GM12878 (cell line): ENCODE measurements at regions of chr5 and their contacts with region 1.

Region 1: GRCh38 chr5:43040287-43041098 is at the start of gene ANXA2R:
- DNase-seq: no peak
- ATAC-seq: peak; percentile 60
- H3K4me3 ChIP-seq: peak within 1 kb of the TSS; percentile 66
- H3K27ac ChIP-seq: peak within 1 kb of the TSS; percentile 82
- H3K4me1 ChIP-seq: peaks cover 20% of the 10 kb centered on the region
- H3K27me3 ChIP-seq: no peaks in the 10 kb centered on the region
- CTCF ChIP-seq: peak; percentile 83 to 95 (median 92)
- EP300 ChIP-seq: no peak
- POLR2A ChIP-seq: peak; percentile 27; the same call in 1 of the 2 replicates
- RAD21 ChIP-seq: peak; percentile 92
- polyA plus RNA-seq, gene ANXA2R: 3.2 to 4.5 TPM

Region 2: DNA sequence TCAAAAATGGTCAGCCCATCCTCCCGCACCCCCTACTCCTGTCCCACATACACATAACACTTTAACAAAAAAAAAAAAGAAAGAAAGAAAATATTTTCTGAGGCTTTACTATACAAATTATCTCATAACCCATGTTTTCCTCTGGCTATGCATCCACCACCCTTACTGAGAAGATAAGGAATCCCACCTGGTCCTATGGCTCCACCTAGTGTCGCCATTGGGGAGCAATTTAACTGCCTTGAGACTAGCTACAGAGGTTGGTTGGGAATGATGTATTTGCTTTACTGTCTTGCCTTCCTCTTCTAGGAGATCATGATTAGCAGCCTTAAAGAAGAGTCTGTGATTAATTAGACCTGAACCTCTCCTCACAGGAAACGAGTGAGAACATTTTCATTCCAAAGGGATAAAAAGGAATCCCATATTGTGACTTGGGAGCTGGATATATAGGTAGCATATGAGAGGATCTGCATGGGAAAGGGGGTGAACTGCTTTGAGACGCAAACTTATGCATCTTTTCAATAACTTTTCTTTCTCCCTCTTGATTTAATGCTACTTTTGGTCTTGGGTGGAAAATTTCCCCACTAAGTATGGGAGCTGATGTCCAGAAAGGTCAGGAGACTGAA is 151.1 kb before region 1 on chr5:
- CTCF ChIA-PET with region 1: interaction called, 11 read pairs
- POLR2A ChIA-PET with region 1: interaction called, 3 read pairs
- RAD21 ChIA-PET with region 1: interaction called, 4 read pairs
- SMC1A ChIA-PET with region 1: no interaction called
- in situ Hi-C with region 1: no loop called
- intact Hi-C with region 1: no loop called
- DNase-seq: no peak
- ATAC-seq: peak; percentile 97; the same call in 2 of the 3 replicates
- H3K4me3 ChIP-seq: no peak overlapping the region
- H3K27ac ChIP-seq: no peak overlapping the region
- H3K4me1 ChIP-seq: no peaks in the 10 kb centered on the region
- H3K27me3 ChIP-seq: peaks cover 0 to 2% of the 10 kb centered on the region in 2 experiments; a peak in 2 of 4 replicates
- CTCF ChIP-seq: peak; percentile 85 to 92 (median 90)
- EP300 ChIP-seq: no peak
- POLR2A ChIP-seq: no peak
- RAD21 ChIP-seq: peak; percentile 96

Region 3: GRCh38 chr5:42994246-42995151 is 46.0 kb before region 1 on chr5:
- CTCF ChIA-PET with region 1: interaction called, 70 read pairs
- POLR2A ChIA-PET with region 1: interaction called, 28 read pairs
- RAD21 ChIA-PET with region 1: interaction called, 48 read pairs
- SMC1A ChIA-PET with region 1: interaction called, 43 read pairs
- in situ Hi-C with region 1: no loop called
- intact Hi-C with region 1: loop called (anchors 1 kb)
- DNase-seq: no peak
- ATAC-seq: peak; percentile 72
- H3K4me3 ChIP-seq: peak overlapping the region; percentile 82
- H3K27ac ChIP-seq: peak overlapping the region; percentile 94
- H3K4me1 ChIP-seq: peaks cover 12% of the 10 kb centered on the region
- H3K27me3 ChIP-seq: no peaks in the 10 kb centered on the region
- CTCF ChIP-seq: peak; percentile 89 to 94 (median 90)
- EP300 ChIP-seq: 0 out of 4 replicates have a peak, but pooled peaks of 1 of the 2 experiments have one; percentile 13
- POLR2A ChIP-seq: 0 out of 2 replicates have a peak, but pooled peaks have one; percentile 29
- RAD21 ChIP-seq: peak; percentile 75

Region 4: GRCh38 chr5:43019614-43020293 is 20.7 kb before region 1 on chr5:
- CTCF ChIA-PET with region 1: interaction called, 44 read pairs
- POLR2A ChIA-PET with region 1: interaction called, 32 read pairs
- RAD21 ChIA-PET with region 1: interaction called, 70 read pairs
- SMC1A ChIA-PET with region 1: interaction called, 111 read pairs
- in situ Hi-C with region 1: no loop called
- intact Hi-C with region 1: loop called (anchors 1 kb)
- DNase-seq: no peak
- ATAC-seq: peak; percentile 78
- H3K4me3 ChIP-seq: peak overlapping the region; percentile 83
- H3K27ac ChIP-seq: peak overlapping the region; percentile 94
- H3K4me1 ChIP-seq: peaks cover 16% of the 10 kb centered on the region
- H3K27me3 ChIP-seq: no peaks in the 10 kb centered on the region
- CTCF ChIP-seq: peak; percentile 42 to 73 (median 59)
- EP300 ChIP-seq: no peak
- POLR2A ChIP-seq: peak; percentile 57
- RAD21 ChIP-seq: peak; percentile 40; the same call in 1 of the 2 replicates

Region 5: GRCh38 chr5:43066799-43067741 is 26.6 kb after region 1 on chr5:
- CTCF ChIA-PET with region 1: interaction called, 25 read pairs
- POLR2A ChIA-PET with region 1: interaction called, 5 read pairs
- RAD21 ChIA-PET with region 1: interaction called, 9 read pairs
- SMC1A ChIA-PET with region 1: interaction called, 18 read pairs
- in situ Hi-C with region 1: no loop called
- intact Hi-C with region 1: loop called (anchors 1 kb)
- DNase-seq: peak; percentile 74
- ATAC-seq: peak; percentile 58
- H3K4me3 ChIP-seq: peak overlapping the region; percentile 91
- H3K27ac ChIP-seq: peak overlapping the region; percentile 100
- H3K4me1 ChIP-seq: peaks cover 10% of the 10 kb centered on the region
- H3K27me3 ChIP-seq: no peaks in the 10 kb centered on the region
- CTCF ChIP-seq: no peak
- EP300 ChIP-seq: peak in 1 of 2 experiments; percentile 100; a peak in 2 of 4 replicates
- POLR2A ChIP-seq: peak; percentile 47; the same call in 1 of the 2 replicates
- RAD21 ChIP-seq: no peak

Region 6: DNA sequence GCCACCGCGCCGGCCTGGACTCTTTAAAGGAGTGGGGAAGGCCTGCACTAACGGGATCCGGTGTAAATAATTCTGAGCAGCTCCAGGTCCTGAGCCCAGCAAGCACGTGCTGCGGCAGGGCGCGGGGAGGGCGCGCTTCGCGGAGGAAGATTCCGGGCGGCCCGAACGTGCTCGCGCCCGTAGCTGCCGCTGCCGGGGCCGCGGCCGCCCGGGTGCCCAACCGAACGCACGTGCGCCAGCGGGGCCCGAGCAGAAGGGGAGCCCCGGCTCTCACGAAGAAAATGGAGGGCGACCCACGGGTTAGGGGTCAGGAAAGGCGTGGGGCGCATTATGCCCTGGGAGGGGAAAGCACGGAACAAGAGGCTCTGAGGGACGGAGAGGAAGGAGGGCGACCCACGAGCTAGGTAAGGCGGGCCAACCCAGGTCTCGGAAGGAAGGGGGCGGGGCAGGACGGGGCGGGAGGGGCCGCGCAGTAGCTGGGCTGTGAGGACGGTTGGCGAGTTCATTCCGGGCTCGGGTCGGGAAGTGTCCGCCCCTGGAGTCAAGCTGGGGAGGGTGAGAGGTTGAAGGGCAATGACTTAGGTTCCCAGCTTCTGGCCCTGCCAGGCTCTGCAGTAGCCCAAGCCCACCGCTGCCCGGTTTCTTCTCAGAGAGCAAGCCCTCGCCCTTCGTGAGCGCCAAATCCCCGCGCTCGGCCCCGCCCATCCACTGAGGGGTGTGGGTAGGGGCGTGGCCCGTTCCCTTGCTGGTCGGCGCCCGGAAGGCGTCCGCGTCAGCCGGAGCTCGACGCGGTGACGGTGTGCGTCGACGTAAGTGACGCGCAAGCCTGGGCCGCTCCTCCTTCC is 80.4 kb after region 1 on chr5 and contains the start of gene ZNF131:
- CTCF ChIA-PET with region 1: interaction called, 9 read pairs
- POLR2A ChIA-PET with region 1: interaction called, 3 read pairs
- RAD21 ChIA-PET with region 1: interaction called, 13 read pairs
- SMC1A ChIA-PET with region 1: interaction called, 10 read pairs
- in situ Hi-C with region 1: no loop called
- intact Hi-C with region 1: no loop called
- DNase-seq: peak; percentile 87
- ATAC-seq: peak; percentile 93
- H3K4me3 ChIP-seq: peak within 1 kb of the TSS; percentile 96
- H3K27ac ChIP-seq: peak within 1 kb of the TSS; percentile 94
- H3K4me1 ChIP-seq: peaks cover 10% of the 10 kb centered on the region
- H3K27me3 ChIP-seq: peaks cover 0 to 1% of the 10 kb centered on the region in 2 experiments; a peak in 1 of 4 replicates
- CTCF ChIP-seq: no peak
- EP300 ChIP-seq: peak in 1 of 2 experiments; percentile 25; a peak in 1 of 4 replicates
- POLR2A ChIP-seq: peak; percentile 87
- RAD21 ChIP-seq: no peak
- polyA plus RNA-seq, gene ZNF131: 16.4 to 23.3 TPM

Region 7: DNA sequence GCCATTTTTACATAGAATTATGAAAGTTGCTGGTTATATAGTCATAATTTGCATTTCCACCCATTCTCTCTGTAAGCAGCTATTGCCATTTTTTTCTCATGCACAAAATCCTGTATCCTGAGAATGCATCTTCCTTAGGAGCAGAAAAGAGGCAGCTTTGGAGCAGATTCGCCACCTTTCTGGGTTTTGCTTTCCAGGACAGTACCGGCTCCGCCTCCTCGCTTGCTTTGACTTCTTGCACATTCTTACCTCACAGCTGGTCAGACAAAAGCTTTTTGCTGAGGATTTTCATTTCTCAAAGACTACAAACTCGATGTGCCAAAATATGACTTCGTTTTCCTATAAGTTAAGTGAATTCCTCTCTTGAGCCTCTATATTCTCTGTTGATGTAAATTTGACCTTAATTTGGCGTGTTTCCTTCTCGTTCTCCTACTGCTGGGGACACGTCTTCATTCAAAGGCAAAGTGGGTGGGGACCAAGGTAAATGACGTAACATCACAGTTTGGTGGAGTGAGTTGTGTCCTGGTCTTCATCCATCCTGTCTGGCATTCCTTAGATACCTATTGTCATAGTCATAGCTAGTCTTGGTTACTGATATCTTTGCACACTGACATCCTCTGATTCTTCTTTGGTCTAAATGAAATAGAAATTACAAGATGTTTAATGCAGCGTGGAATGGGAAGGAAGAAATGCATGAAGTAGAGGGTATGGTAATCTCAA is 670.8 kb after region 1 on chr5:
- CTCF ChIA-PET with region 1: no interaction called
- POLR2A ChIA-PET with region 1: no interaction called
- RAD21 ChIA-PET with region 1: no interaction called
- SMC1A ChIA-PET with region 1: no interaction called
- in situ Hi-C with region 1: no loop called
- intact Hi-C with region 1: no loop called
- DNase-seq: no peak
- ATAC-seq: no peak
- H3K4me3 ChIP-seq: no peak overlapping the region
- H3K27ac ChIP-seq: no peak overlapping the region
- H3K4me1 ChIP-seq: no peaks in the 10 kb centered on the region
- H3K27me3 ChIP-seq: no peaks in the 10 kb centered on the region
- CTCF ChIP-seq: no peak
- EP300 ChIP-seq: no peak
- POLR2A ChIP-seq: no peak
- RAD21 ChIP-seq: no peak